ENCODE measurements at regions of chr16 and their contacts with region 1.

Region 1: DNA sequence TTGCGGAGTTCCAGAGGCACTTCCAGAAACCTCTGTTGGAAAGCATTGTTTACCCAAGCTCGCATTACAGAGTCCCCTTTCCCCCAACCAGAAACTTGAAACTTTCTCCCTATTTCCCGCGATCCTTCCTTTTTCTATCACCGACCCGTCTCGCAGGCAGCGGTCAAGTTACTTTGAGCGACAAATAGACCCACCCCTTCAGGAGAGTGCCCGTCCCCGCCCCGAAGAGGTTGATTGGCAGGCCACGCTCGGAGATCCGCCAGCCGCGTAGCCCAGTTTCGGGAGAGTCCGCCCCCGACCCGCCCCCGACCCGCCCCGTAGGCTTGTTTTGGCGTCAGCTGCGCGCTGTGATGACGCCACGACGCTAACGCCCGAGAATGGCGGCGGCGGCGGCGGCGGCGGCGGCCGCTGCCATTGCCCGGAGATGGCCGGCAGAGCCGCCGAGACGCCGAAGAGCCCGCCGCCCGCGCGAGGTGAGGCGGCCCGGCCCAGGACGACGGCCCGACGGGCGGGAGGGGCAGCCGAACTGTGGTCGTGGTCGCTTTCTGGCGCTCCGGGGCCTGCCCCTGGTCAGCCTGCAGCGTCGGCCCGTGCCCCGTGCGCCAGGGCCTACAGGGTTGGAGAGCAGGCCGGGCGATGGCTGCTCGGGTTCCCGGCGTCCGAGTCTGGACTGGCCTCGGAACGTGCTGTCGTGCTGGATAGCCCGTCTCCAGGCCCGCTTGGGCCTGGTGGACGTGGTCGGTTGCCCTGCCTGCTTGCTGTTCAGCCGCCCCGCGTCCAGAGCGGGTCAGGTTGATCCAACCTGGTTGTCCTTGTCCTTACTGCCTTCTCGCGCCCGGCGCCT is at the start of gene PSKH1:
- DNase-seq: peak; percentile 86 to 96
- ATAC-seq: peak; percentile 98 to 99 (median 98)
- H3K4me3 ChIP-seq: peak within 1 kb of the TSS; percentile 65
- H3K4me3 Mint-ChIP-seq: peak within 1 kb of the TSS; percentile 96
- H3K27ac ChIP-seq: peak within 1 kb of the TSS; percentile 83
- H3K27ac Mint-ChIP-seq: peak within 1 kb of the TSS; percentile 91 to 95
- H3K4me1 ChIP-seq: peaks cover 17% of the 10 kb centered on the region
- H3K4me1 Mint-ChIP-seq: peaks cover 28 to 31% of the 10 kb centered on the region in 2 donors
- H3K27me3 ChIP-seq: no peaks in the 10 kb centered on the region
- H3K27me3 Mint-ChIP-seq: no peaks in the 10 kb centered on the region
- CTCF ChIP-seq: no peak
- total RNA-seq, gene PSKH1: 16.8 to 24.7 (median 19.5) TPM

Region 2: DNA sequence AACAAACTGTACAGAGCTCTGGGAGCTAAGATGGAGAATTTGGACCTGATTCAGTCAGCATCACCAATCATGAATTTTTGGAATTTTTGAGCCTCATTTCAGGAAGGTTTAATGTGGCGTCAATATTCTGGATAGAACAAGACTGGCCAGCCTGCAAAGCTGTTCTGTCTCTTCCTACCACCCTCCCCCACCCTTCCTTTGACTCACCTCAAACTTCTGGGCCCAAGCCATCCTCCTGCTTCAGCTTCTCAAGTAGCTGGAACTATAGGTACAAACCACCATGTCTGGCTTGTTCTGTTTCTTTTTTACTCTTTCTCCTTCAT is 298.1 kb before region 1 on chr16:
- intact Hi-C with region 1: no loop called
- DNase-seq: no peak
- ATAC-seq: no peak
- H3K4me3 ChIP-seq: no peak overlapping the region
- H3K4me3 Mint-ChIP-seq: no peak overlapping the region
- H3K27ac ChIP-seq: no peak overlapping the region
- H3K27ac Mint-ChIP-seq: peak overlapping the region; percentile 47 to 69
- H3K4me1 ChIP-seq: peaks cover 4% of the 10 kb centered on the region
- H3K4me1 Mint-ChIP-seq: peaks cover 42 to 45% of the 10 kb centered on the region in 2 donors
- H3K27me3 ChIP-seq: no peaks in the 10 kb centered on the region
- H3K27me3 Mint-ChIP-seq: no peaks in the 10 kb centered on the region
- CTCF ChIP-seq: no peak

Region 3: GRCh38 chr16:67872786-67873537 is 20.2 kb before region 1 on chr16 and contains the start of gene EDC4:
- intact Hi-C with region 1: loop called (anchors 2 kb)
- DNase-seq: peak; percentile 91
- ATAC-seq: peak; percentile 92 to 96 (median 94)
- H3K4me3 ChIP-seq: peak within 1 kb of the TSS; percentile 89
- H3K4me3 Mint-ChIP-seq: peak within 1 kb of the TSS; percentile 92
- H3K27ac ChIP-seq: peak within 1 kb of the TSS; percentile 86
- H3K27ac Mint-ChIP-seq: peak within 1 kb of the TSS; percentile 90
- H3K4me1 ChIP-seq: peaks cover 24% of the 10 kb centered on the region
- H3K4me1 Mint-ChIP-seq: peaks cover 27 to 37% of the 10 kb centered on the region in 2 donors
- H3K27me3 ChIP-seq: no peaks in the 10 kb centered on the region
- H3K27me3 Mint-ChIP-seq: no peaks in the 10 kb centered on the region
- CTCF ChIP-seq: no peak
- total RNA-seq, gene EDC4: 91.9 to 111 (median 105) TPM